A673 (cell line): ENCODE measurements at regions of chr20 and their contacts with region 1.

Region 1: GRCh38 chr20:3312940-3313682 is 74.1 kb upstream of the SLC4A11 start:
- DNase-seq: peak; percentile 60
- H3K4me3 ChIP-seq: no peak overlapping the region
- H3K27ac ChIP-seq: peak overlapping the region; percentile 56
- H3K4me1 ChIP-seq: peaks cover 15% of the 10 kb centered on the region
- H3K27me3 ChIP-seq: no peaks in the 10 kb centered on the region
- CTCF ChIP-seq: no peak

Region 2: DNA sequence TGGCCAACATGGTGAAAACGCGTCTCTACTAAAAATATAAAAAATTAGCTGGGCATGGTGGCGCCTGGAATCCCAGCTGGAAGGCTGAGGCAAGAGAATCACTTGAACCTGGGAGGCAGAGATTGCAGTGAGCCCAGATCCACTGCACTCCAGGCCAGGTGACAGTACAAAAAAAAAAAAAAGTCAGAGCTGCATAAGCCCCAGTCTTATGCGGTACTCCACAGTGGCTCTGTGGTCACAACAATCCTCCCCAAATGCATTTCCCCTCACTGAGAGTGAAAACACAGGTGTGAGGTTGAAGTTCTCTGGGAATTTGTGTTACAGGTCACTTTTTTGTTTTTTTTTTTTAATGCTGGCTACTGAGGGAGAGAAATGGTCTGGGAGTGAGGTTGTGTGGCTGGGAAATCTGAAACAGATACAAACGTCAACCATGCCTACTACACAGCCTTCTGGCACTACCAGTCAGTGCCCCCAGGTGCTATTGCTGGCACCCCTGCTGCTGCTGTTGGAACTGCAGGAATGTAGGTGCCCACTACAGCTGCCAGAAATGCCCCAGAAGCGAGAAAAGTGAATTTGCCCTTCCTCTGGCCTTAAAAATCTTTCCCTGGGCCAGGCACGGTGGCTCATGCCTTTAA is 261.6 kb before region 1 on chr20:
- CTCF ChIA-PET with region 1: no interaction called
- POLR2A ChIA-PET with region 1: no interaction called
- intact Hi-C with region 1: loop called (anchors 1 kb)
- DNase-seq: no peak
- H3K4me3 ChIP-seq: no peak overlapping the region
- H3K27ac ChIP-seq: no peak overlapping the region
- H3K4me1 ChIP-seq: peaks cover 2% of the 10 kb centered on the region
- H3K27me3 ChIP-seq: no peaks in the 10 kb centered on the region
- CTCF ChIP-seq: no peak

Region 3: GRCh38 chr20:3209257-3209945 is 103.7 kb before region 1 on chr20 and contains the start of gene ITPA:
- CTCF ChIA-PET with region 1: no interaction called
- POLR2A ChIA-PET with region 1: interaction called, 12 read pairs
- intact Hi-C with region 1: no loop called
- DNase-seq: peak; percentile 71
- H3K4me3 ChIP-seq: peak within 1 kb of the TSS; percentile 81
- H3K27ac ChIP-seq: peak within 1 kb of the TSS; percentile 83
- H3K4me1 ChIP-seq: no peaks in the 10 kb centered on the region
- H3K27me3 ChIP-seq: no peaks in the 10 kb centered on the region
- CTCF ChIP-seq: no peak
- total RNA-seq, gene ITPA: 79.9 and 81.3 TPM in 2 replicates

Region 4: GRCh38 chr20:3563548-3564177 is 250.6 kb after region 1 on chr20:
- CTCF ChIA-PET with region 1: no interaction called
- POLR2A ChIA-PET with region 1: no interaction called
- intact Hi-C with region 1: no loop called
- DNase-seq: peak; percentile 59
- H3K4me3 ChIP-seq: no peak overlapping the region
- H3K27ac ChIP-seq: no peak overlapping the region
- H3K4me1 ChIP-seq: no peaks in the 10 kb centered on the region
- H3K27me3 ChIP-seq: no peaks in the 10 kb centered on the region
- CTCF ChIP-seq: peak; percentile 87